ENCODE measurements at regions of chr22 and their contacts with region 1.

Region 1: DNA sequence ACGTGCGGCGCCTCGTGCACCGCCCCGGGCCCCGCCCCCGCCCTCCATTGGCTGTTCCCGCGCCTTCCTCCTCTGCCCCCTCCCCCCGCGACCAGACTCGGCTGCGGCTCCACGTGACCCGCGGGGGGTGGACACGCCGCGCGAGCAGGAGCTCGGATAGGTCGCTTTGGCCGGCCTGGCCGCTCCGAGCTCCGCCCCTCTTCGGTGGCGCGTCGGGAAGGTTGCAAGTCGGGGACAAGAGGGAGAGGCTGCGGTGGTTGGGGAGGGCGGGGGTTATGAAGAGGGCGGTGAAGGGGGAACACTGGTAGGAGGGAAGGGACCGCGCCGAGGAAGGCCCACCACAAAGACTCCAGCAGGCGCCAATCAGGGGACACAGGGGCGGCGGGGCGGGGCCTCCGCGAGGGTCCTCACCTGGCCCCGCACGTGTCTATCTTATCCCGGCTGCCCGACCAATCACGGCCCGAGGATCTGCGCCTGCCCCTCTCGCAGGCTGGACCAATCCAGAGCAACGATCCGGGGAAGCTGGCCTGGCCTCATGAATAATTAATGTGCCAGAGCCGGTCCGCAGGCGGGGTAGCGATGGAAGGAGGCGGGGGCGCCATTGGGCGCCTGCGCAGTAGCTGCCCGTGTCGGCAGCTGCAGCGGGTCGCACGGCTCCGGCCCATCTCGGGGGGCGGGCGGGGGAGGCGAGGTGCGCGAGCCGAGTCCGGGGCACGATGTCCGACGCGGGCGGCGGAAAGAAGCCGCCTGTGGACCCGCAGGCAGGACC is at the start of gene TEF:
- DNase-seq: peak; percentile 97 to 100 (median 98)
- ATAC-seq: peak; percentile 80
- H3K4me3 ChIP-seq: peak within 1 kb of the TSS; percentile 71 to 88
- H3K4me3 Mint-ChIP-seq: peak within 1 kb of the TSS; percentile 93
- H3K27ac ChIP-seq: peak within 1 kb of the TSS; percentile 87 to 95
- H3K27ac Mint-ChIP-seq: peak within 1 kb of the TSS; percentile 93
- H3K4me1 ChIP-seq: peaks cover 15% of the 10 kb centered on the region
- H3K4me1 Mint-ChIP-seq: peaks cover 21% of the 10 kb centered on the region
- H3K27me3 ChIP-seq: no peaks in the 10 kb centered on the region
- H3K27me3 Mint-ChIP-seq: no peaks in the 10 kb centered on the region
- CTCF ChIP-seq: no peak
- total RNA-seq, gene TEF: 2.8 to 3.8 TPM

Region 2: DNA sequence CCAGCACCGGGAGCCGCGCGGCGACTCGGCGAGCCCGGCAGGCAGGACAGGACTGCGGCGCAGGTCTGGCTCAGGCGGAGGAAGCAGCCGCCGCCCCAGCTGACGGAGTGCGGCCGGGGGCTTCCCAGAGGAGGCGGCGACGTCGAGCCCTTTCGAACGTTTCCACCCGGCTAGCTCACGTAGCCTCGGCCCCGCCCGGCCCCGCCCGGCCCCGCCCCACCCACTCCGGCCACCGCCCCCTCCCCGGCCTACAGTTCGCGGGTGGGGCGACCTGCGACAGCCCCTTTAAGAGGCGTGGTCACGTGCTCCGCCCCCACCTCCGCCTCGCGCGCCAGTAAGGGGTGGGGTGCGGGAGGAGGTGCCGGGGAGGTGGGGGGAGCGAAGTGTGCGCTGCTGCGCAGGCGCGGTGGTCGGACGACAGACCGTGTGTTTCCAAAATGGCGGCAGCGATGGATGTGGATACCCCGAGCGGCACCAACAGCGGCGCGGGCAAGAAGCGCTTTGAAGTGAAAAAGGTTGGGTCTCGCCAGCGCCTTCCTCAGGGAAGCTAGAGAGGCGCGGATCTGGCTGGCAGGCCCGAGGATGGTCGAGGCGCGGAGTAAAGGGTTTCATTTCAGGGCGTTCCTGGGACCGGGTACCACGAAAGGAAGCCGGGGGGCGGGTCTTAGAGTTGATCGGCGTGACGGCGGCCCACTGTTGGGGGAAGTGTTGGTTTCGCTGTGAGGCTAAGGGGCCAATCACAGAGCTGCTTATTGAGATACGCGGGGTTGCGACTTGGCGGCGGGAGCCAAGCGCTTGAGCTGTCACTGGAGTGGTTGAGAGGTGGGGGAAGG is 430.3 kb before region 1 on chr22 and contains the start of gene RBX1:
- CTCF ChIA-PET with region 1: no interaction called
- POLR2A ChIA-PET with region 1: interaction called, 3 read pairs
- intact Hi-C with region 1: loop called in 1 of 2 experiments (anchors 1 kb)
- DNase-seq: peak; percentile 97 to 99 (median 99)
- ATAC-seq: peak; percentile 84
- H3K4me3 ChIP-seq: peak within 1 kb of the TSS; percentile 95 to 100
- H3K4me3 Mint-ChIP-seq: peak within 1 kb of the TSS; percentile 100
- H3K27ac ChIP-seq: peak within 1 kb of the TSS; percentile 99 to 100
- H3K27ac Mint-ChIP-seq: peak within 1 kb of the TSS; percentile 100
- H3K4me1 ChIP-seq: peaks cover 28% of the 10 kb centered on the region
- H3K4me1 Mint-ChIP-seq: peaks cover 33% of the 10 kb centered on the region
- H3K27me3 ChIP-seq: no peaks in the 10 kb centered on the region
- H3K27me3 Mint-ChIP-seq: no peaks in the 10 kb centered on the region
- CTCF ChIP-seq: no peak
- total RNA-seq, gene RBX1: 22.1 to 22.3 TPM

Region 3: GRCh38 chr22:41285820-41286638 is 95.5 kb before region 1 on chr22 and contains the start of gene RANGAP1:
- CTCF ChIA-PET with region 1: no interaction called
- POLR2A ChIA-PET with region 1: interaction called, 28 read pairs
- intact Hi-C with region 1: loop called (anchors 1 kb)
- DNase-seq: peak; percentile 96 to 100 (median 98)
- ATAC-seq: peak; percentile 86
- H3K4me3 ChIP-seq: peak within 1 kb of the TSS; percentile 76 to 99
- H3K4me3 Mint-ChIP-seq: peak within 1 kb of the TSS; percentile 92
- H3K27ac ChIP-seq: peak within 1 kb of the TSS; percentile 87 to 95
- H3K27ac Mint-ChIP-seq: peak within 1 kb of the TSS; percentile 98
- H3K4me1 ChIP-seq: peaks cover 15% of the 10 kb centered on the region
- H3K4me1 Mint-ChIP-seq: peaks cover 32% of the 10 kb centered on the region
- H3K27me3 ChIP-seq: no peaks in the 10 kb centered on the region
- H3K27me3 Mint-ChIP-seq: no peaks in the 10 kb centered on the region
- CTCF ChIP-seq: no peak
- total RNA-seq, gene RANGAP1: 200 to 210 TPM

Region 4: GRCh38 chr22:41448189-41448808 is 66.8 kb after region 1 on chr22:
- CTCF ChIA-PET with region 1: no interaction called
- POLR2A ChIA-PET with region 1: interaction called, 25 read pairs
- intact Hi-C with region 1: loop called (anchors 1 kb)
- DNase-seq: peak; percentile 77 to 97 (median 88)
- ATAC-seq: peak; percentile 70
- H3K4me3 ChIP-seq: peak overlapping the region; percentile 79 to 96
- H3K4me3 Mint-ChIP-seq: peak overlapping the region; percentile 90
- H3K27ac ChIP-seq: peak overlapping the region; percentile 78 to 99
- H3K27ac Mint-ChIP-seq: peak overlapping the region; percentile 98
- H3K4me1 ChIP-seq: peaks cover 11% of the 10 kb centered on the region
- H3K4me1 Mint-ChIP-seq: peaks cover 23% of the 10 kb centered on the region
- H3K27me3 ChIP-seq: no peaks in the 10 kb centered on the region
- H3K27me3 Mint-ChIP-seq: no peaks in the 10 kb centered on the region
- CTCF ChIP-seq: no peak

Region 5: GRCh38 chr22:41589391-41590241 is 208.1 kb after region 1 on chr22 and contains the start of gene PMM1:
- CTCF ChIA-PET with region 1: no interaction called
- POLR2A ChIA-PET with region 1: interaction called, 9 read pairs
- intact Hi-C with region 1: loop called (anchors 1 kb)
- DNase-seq: peak; percentile 100
- ATAC-seq: peak; percentile 97
- H3K4me3 ChIP-seq: peak within 1 kb of the TSS; percentile 94 to 98
- H3K4me3 Mint-ChIP-seq: peak within 1 kb of the TSS; percentile 92
- H3K27ac ChIP-seq: peak within 1 kb of the TSS; percentile 50 to 75
- H3K27ac Mint-ChIP-seq: peak within 1 kb of the TSS; percentile 88
- H3K4me1 ChIP-seq: peaks cover 17% of the 10 kb centered on the region
- H3K4me1 Mint-ChIP-seq: peaks cover 20% of the 10 kb centered on the region
- H3K27me3 ChIP-seq: no peaks in the 10 kb centered on the region
- H3K27me3 Mint-ChIP-seq: no peaks in the 10 kb centered on the region
- CTCF ChIP-seq: no peak
- total RNA-seq, gene PMM1: 19.1 to 22.4 TPM

Region 6: GRCh38 chr22:41946629-41947423 is 565.3 kb after region 1 on chr22 and contains the start of gene CENPM:
- CTCF ChIA-PET with region 1: no interaction called
- POLR2A ChIA-PET with region 1: no interaction called
- intact Hi-C with region 1: loop called in 1 of 2 experiments (anchors 10 kb)
- DNase-seq: peak; percentile 65 to 89 (median 84)
- ATAC-seq: peak; percentile 94
- H3K4me3 ChIP-seq: peak within 1 kb of the TSS; percentile 75 to 87
- H3K4me3 Mint-ChIP-seq: peak within 1 kb of the TSS; percentile 91
- H3K27ac ChIP-seq: peak within 1 kb of the TSS in 1 of 2 experiments; percentile 4
- H3K27ac Mint-ChIP-seq: no peak within 1 kb of the TSS
- H3K4me1 ChIP-seq: peaks cover 19% of the 10 kb centered on the region
- H3K4me1 Mint-ChIP-seq: peaks cover 13% of the 10 kb centered on the region
- H3K27me3 ChIP-seq: peaks cover 0 to 2% of the 10 kb centered on the region in 2 experiments
- H3K27me3 Mint-ChIP-seq: no peaks in the 10 kb centered on the region
- CTCF ChIP-seq: no peak
- total RNA-seq, gene CENPM: 9.4 to 10.9 TPM